Right ventricle myocardium inferior (tissue), 1 donor: ENCODE measurements at regions of chr12 and their contacts with region 1.

Region 1: GRCh38 chr12:26091822-26092221 is 33.0 kb downstream of the BHLHE41 start:
- DNase-seq: no peak
- ATAC-seq: no peak

Region 2: DNA sequence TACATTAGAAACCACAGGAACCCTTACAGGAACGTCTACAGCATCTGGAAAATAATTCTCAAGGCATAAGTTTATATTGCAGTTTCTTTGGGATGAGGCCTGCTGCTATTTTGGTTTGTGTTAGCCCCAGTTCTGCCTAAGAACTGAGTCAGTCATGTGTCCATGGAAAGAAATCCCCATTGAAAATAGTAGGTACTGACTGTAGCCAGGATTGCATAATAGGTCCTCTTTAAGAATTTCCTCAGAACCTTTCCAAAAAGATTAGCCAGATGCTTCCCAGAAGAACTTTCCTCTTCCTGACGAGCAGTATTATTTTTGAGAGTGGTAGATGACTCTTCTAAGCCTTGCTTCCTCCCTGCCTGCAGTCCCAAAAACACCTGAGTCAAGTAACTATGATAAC is 80.7 kb before region 1 on chr12:
- intact Hi-C with region 1: no loop called
- DNase-seq: no peak
- ATAC-seq: peak; percentile 91

Region 3: DNA sequence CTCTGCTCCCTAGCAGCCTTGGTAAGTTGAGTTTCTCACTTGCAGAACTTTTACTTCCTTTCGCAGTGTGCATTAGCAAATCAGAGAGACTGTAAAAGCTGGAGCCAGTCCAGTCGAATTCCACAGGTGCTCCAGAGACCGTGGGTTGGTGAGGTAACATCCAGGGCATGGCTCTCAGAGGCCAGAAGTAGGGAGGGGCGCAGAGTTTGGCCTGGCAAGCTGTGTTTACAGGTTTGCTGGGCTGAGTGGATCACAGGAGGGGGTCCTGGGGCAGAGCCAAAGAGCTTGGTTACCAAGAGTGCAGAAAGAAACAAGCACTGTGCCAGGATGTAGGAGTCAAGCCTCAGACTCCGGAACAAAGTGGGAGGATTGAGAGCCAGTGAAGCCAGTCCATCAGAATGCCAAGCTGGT is 43.2 kb after region 1 on chr12:
- intact Hi-C with region 1: no loop called
- DNase-seq: peak; percentile 53
- ATAC-seq: no peak

Region 4: GRCh38 chr12:26651566-26652188 is 559.9 kb after region 1 on chr12:
- intact Hi-C with region 1: loop called (anchors 5 kb)
- DNase-seq: no peak
- ATAC-seq: peak; percentile 50